WTC11 (cell line): ENCODE measurements at regions of chr2 and their contacts with region 1.

Region 1: DNA sequence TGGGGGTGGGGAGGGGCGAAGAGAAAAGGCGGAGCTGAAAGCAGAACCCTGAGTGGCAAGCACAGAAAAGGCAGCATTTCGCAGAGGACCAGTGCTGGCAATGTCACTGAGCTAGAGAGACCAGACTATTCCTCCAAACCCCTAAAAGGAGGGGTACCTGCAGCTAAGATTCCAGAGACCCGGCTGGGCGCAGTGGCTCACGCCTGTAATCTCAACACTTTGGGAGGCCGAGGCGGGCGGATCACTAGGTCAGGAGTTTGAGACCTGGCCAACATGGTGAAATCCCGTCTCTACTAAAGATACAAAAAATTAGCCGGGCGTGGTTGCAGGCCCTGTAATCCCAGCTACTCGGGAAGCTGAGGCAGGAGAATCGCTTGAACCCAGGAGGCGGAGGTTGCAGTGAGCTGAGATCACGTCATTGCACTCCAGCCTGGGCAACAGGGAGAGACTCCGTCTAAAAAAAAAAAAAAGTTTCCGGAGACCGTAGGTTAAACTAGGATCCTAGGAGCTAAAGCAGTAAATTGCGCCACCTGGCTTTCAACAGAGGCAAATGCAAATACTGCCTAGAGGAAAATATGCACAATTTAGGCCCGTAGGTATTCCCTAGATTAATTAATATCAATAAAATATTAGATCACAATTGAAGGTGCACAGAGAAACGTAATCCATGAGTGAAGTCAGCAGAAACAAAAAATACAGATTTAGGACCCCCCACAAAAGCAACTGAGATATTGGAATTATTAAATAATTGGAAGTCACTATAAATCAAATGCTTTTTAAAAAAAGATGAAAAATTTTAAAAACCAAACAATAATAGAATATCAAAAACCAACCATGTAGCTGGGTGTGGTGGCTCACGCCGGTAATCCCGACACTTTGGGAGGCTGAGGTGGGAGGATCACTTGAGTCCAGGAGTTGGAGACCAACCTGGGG is 4.9 kb downstream of the UCN start:
- DNase-seq: no peak
- ATAC-seq: peak; percentile 21
- H3K4me3 Mint-ChIP-seq: peak overlapping the region; percentile 50
- H3K27ac Mint-ChIP-seq: no peak overlapping the region
- H3K4me1 Mint-ChIP-seq: peaks cover 8% of the 10 kb centered on the region; the same call in 1 of the 2 replicates
- H3K27me3 Mint-ChIP-seq: peaks cover 39% of the 10 kb centered on the region
- CTCF ChIP-seq: peak; percentile 92

Region 2: DNA sequence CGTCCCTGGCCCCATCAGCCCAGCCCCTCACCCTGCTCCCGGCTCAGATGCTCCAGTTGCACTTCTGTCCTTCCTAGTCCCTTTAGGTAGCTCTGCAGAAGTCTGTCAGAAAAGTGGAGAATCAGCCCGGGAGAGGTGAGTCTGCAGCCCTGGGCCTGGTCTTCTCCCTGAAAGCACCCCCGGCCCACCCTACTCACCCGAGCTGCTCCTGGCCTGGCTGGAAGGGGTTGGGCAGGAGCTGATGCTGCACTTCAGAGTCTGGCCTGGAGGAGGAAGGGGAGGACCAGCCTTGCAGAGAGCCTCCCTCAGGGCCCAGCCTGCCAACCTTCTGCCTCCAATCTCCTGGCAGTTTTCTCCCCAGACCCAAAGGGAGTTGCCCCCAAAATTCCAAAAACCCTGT is 201.0 kb before region 1 on chr2:
- CTCF ChIA-PET with region 1: interaction called, 11 read pairs
- POLR2A ChIA-PET with region 1: no interaction called
- DNase-seq: no peak
- ATAC-seq: no peak; the same call in 1 of the 2 replicates
- H3K4me3 Mint-ChIP-seq: no peak overlapping the region
- H3K27ac Mint-ChIP-seq: no peak overlapping the region
- H3K4me1 Mint-ChIP-seq: no peaks in the 10 kb centered on the region
- H3K27me3 Mint-ChIP-seq: 0 out of 2 replicates have a peak, but pooled peaks cover 5% of the 10 kb centered on the region
- CTCF ChIP-seq: no peak

Region 3: GRCh38 chr2:27249891-27250651 is 53.3 kb before region 1 on chr2:
- CTCF ChIA-PET with region 1: interaction called, 74 read pairs
- POLR2A ChIA-PET with region 1: no interaction called
- DNase-seq: peak; percentile 89
- ATAC-seq: peak; percentile 86
- H3K4me3 Mint-ChIP-seq: peak overlapping the region; percentile 63
- H3K27ac Mint-ChIP-seq: no peak overlapping the region
- H3K4me1 Mint-ChIP-seq: peaks cover 18% of the 10 kb centered on the region
- H3K27me3 Mint-ChIP-seq: peaks cover 7% of the 10 kb centered on the region
- CTCF ChIP-seq: peak; percentile 56; the same call in 1 of the 2 replicates

Region 4: DNA sequence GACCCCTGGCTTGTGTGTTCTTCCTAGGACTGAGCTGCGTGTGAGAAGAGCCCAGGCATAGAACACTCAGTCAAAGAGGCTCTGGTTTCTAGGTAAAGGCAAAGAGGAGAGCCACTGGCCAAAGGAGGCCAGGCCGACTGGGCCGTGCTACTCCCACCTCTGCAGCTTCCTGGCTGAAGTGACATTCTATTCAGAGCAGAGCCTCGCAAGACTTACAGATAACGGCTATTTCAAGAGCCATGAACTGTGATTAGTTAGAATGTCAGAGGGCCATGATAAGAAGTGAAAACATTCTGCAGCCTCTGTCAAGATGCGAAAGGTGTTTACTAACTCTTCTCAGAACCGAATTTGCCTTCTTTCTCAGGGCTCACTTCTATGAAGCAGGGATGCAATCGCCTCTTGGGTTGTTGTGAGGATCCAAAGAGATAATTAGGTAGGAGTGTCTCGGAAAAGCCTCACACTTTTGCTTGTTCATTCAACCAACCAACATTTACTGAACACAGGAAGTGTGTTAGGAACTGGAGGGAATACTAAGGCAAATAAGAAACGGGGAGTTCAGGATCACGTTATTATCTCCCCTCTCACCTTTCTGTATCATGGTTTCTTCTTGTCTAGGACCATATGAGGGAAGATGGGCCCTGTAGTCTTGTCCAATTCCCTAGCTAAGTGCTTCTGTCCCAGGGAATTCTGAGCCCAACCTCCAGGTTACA is 31.6 kb before region 1 on chr2:
- CTCF ChIA-PET with region 1: interaction called, 15 read pairs
- POLR2A ChIA-PET with region 1: no interaction called
- DNase-seq: no peak
- ATAC-seq: no peak
- H3K4me3 Mint-ChIP-seq: no peak overlapping the region
- H3K27ac Mint-ChIP-seq: no peak overlapping the region
- H3K4me1 Mint-ChIP-seq: peaks cover 6% of the 10 kb centered on the region; the same call in 1 of the 2 replicates
- H3K27me3 Mint-ChIP-seq: peaks cover 7% of the 10 kb centered on the region
- CTCF ChIP-seq: no peak

Region 5: DNA sequence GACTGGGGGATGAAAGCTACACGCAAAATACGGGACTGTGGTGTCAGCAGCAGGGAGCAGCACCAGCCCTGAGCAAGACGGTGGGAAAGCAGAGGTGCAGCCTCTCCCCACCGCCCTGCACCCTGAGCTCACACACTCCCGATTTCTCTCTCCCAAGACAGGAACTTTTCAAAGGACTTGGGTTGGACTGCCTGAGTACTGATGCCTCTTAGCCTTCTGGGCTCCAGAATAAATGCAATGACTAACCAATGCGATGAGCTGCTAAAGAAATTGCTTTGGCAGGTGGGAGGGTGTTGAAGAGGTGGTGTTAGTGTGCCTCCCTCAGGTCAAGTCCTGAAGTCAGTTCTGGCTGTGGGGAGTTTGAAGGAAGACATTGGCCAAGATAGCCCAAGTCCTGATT is 11.5 kb before region 1 on chr2:
- CTCF ChIA-PET with region 1: interaction called, 89 read pairs
- POLR2A ChIA-PET with region 1: interaction called, 3 read pairs
- DNase-seq: peak; percentile 35
- ATAC-seq: peak; percentile 95
- H3K4me3 Mint-ChIP-seq: peak overlapping the region; percentile 29
- H3K27ac Mint-ChIP-seq: no peak overlapping the region
- H3K4me1 Mint-ChIP-seq: peaks cover 18% of the 10 kb centered on the region
- H3K27me3 Mint-ChIP-seq: no peaks in the 10 kb centered on the region
- CTCF ChIP-seq: no peak

Region 6: GRCh38 chr2:27370026-27370815 is 66.9 kb after region 1 on chr2 and contains the starts of genes EIF2B4 and SNX17:
- CTCF ChIA-PET with region 1: interaction called, 15 read pairs
- POLR2A ChIA-PET with region 1: no interaction called
- DNase-seq: peak; percentile 99
- ATAC-seq: peak; percentile 91
- H3K4me3 Mint-ChIP-seq: peak within 1 kb of the TSS; percentile 97
- H3K27ac Mint-ChIP-seq: peak within 1 kb of the TSS; percentile 96
- H3K4me1 Mint-ChIP-seq: peaks cover 20% of the 10 kb centered on the region
- H3K27me3 Mint-ChIP-seq: no peaks in the 10 kb centered on the region
- CTCF ChIP-seq: no peak
- total RNA-seq, gene EIF2B4: 46.6 to 53.6 TPM (median 49.1 TPM) in 3 replicates
- total RNA-seq, gene SNX17: 72.5 to 75.3 TPM (median 74.7 TPM) in 3 replicates